ENCODE measurements at regions of chr1 and their contacts with region 1.

Region 1: GRCh38 chr1:113042285-113043143 is 30.5 kb upstream of the LRIG2 start:
- DNase-seq: peak; percentile 67 to 82 (median 74)
- ATAC-seq: peak; percentile 86 to 92 (median 92)
- H3K4me3 ChIP-seq: no peak overlapping the region
- H3K27ac ChIP-seq: peak overlapping the region in 1 of 12 donors; percentile 73
- H3K4me1 ChIP-seq: peaks cover 0 to 32% (median 9%) of the 10 kb centered on the region in 12 donors
- H3K27me3 ChIP-seq: no peaks in the 10 kb centered on the region
- CTCF ChIP-seq: peak; percentile 40 to 74 (median 66)
- POLR2A ChIP-seq: no peak

Region 2: GRCh38 chr1:112809253-112809684 is 233.2 kb before region 1 on chr1:
- intact Hi-C with region 1: loop called (anchors 1 to 5 kb)
- DNase-seq: peak; percentile 64 to 86 (median 74)
- ATAC-seq: peak; percentile 75 to 84 (median 80)
- H3K4me3 ChIP-seq: no peak overlapping the region
- H3K27ac ChIP-seq: no peak overlapping the region
- H3K4me1 ChIP-seq: peaks cover 0 to 12% (median 3%) of the 10 kb centered on the region in 12 donors
- H3K27me3 ChIP-seq: no peaks in the 10 kb centered on the region
- CTCF ChIP-seq: peak; percentile 69 to 91 (median 84)
- POLR2A ChIP-seq: no peak

Region 3: DNA sequence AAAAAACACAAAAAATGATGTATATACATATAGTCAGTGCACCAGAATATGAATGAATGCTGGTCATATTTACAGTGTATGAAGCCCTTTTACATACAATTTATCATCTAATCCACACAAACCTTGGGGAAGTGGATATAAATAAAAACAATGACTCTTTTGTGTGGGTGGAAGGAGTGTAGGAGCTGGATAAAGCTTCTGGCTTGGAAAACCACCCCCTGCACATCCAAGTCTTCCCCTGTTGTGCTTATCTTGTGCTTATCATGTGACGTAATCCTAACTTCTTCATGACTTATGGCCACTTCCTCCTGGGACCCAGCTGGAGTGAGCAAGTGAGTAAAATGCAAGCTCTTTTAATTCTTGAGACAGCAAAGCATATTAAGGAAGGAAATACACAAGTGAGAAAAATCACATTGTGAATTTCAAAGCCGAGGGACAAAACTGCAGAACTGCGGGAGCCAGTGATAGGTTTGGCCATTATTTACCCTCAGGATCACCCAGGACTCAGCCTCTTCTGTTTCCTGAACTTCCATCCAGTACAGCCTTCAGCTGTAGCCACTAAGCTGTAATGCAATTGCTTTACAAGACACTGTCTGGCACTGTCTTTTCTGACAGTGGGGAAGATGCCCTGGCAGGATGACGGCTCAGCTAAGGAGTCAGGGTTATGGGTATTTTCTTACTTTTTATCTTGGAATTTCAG is 223.4 kb before region 1 on chr1:
- intact Hi-C with region 1: loop called in 1 of 10 experiments (anchors 5 kb)
- DNase-seq: peak in 2 of 5 donors; percentile 27 to 42
- ATAC-seq: peak in 3 of 4 donors; percentile 67 to 93 (median 67)
- H3K4me3 ChIP-seq: no peak overlapping the region
- H3K27ac ChIP-seq: peak overlapping the region in 5 of 12 donors; percentile 18 to 65 (median 34)
- H3K4me1 ChIP-seq: peaks cover 0 to 18% (median 6%) of the 10 kb centered on the region in 12 donors
- H3K27me3 ChIP-seq: no peaks in the 10 kb centered on the region
- CTCF ChIP-seq: no peak
- POLR2A ChIP-seq: no peak

Region 4: GRCh38 chr1:112882271-112882744 is 160.2 kb before region 1 on chr1:
- intact Hi-C with region 1: loop called (anchors 1 to 2 kb)
- DNase-seq: peak in 3 of 5 donors; percentile 24 to 36 (median 26)
- ATAC-seq: peak; percentile 39 to 59 (median 46)
- H3K4me3 ChIP-seq: no peak overlapping the region
- H3K27ac ChIP-seq: peak overlapping the region in 9 of 12 donors; percentile 41 to 79 (median 59)
- H3K4me1 ChIP-seq: peaks cover 0 to 18% (median 11%) of the 10 kb centered on the region in 12 donors
- H3K27me3 ChIP-seq: no peaks in the 10 kb centered on the region
- CTCF ChIP-seq: no peak
- POLR2A ChIP-seq: no peak

Region 5: DNA sequence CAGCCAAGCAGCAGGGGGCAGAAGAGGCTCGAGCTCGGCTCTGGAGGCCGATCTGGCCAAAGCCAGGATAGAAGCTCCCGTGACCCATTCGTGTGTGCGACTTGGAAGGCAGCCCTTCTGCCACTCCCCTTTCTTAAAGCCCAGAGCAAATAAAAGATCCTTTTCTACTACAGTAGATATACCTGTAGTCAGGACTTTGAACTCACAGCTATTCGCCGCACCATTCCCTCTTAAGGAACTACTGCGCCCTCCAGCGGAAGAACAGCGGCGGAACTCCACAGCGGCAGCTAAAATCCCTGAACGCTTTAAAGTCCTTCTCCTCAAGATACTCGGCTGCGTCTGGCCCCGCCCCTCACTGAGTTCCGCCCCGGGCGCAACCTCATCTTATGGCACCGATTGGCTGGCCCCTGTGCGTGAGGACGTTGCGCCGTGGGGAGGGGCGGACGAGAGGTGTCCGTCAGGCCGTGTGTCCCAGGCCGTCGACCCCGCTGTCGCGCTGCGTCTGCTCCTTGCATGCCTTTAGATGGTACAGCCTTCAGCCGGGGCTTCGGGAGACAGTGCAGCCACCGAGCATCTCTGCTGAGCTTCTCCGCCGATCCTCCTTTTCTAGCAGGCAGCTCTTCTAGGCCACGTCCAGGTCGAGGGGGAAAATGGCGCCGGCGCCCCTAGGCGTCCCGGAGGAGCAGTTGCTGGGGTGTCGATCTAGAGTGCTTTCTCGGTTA is 30.4 kb after region 1 on chr1 and contains the start of gene LRIG2:
- intact Hi-C with region 1: no loop called
- DNase-seq: peak; percentile 98 to 99 (median 98)
- ATAC-seq: peak; percentile 99 to 100 (median 100)
- H3K4me3 ChIP-seq: peak within 1 kb of the TSS; percentile 66 to 89 (median 78)
- H3K27ac ChIP-seq: peak within 1 kb of the TSS; percentile 87 to 96 (median 92)
- H3K4me1 ChIP-seq: peaks cover 4 to 40% (median 26%) of the 10 kb centered on the region in 12 donors
- H3K27me3 ChIP-seq: no peaks in the 10 kb centered on the region
- CTCF ChIP-seq: peak; percentile 82 to 96 (median 86)
- POLR2A ChIP-seq: peak; percentile 71 to 85
- total RNA-seq, gene LRIG2: 5.9 to 13.1 (median 8.6) TPM